Keratinocyte (primary cell): ENCODE measurements at regions of chrX and their contacts with region 1.

Region 1: GRCh38 chrX:108447303-108447702 is 7.7 kb downstream of the COL4A5 start:
- DNase-seq: no peak
- H3K4me3 ChIP-seq: no peak overlapping the region
- H3K27ac ChIP-seq: no peak overlapping the region
- H3K4me1 ChIP-seq: peaks cover 7% of the 10 kb centered on the region
- H3K27me3 ChIP-seq: no peaks in the 10 kb centered on the region
- CTCF ChIP-seq: no peak

Region 2: GRCh38 chrX:108412783-108413182 is 34.5 kb before region 1 on chrX:
- dilution Hi-C with region 1: loop called (anchors 5 kb)
- DNase-seq: no peak
- H3K4me3 ChIP-seq: no peak overlapping the region
- H3K27ac ChIP-seq: no peak overlapping the region
- H3K4me1 ChIP-seq: peaks cover 12% of the 10 kb centered on the region
- H3K27me3 ChIP-seq: no peaks in the 10 kb centered on the region
- CTCF ChIP-seq: no peak